ENCODE measurements at regions of chr11 and their contacts with region 1.

Region 1: GRCh38 chr11:88552377-88553062 is 215.0 kb upstream of the CTSC start:
- DNase-seq: peak; percentile 39
- H3K4me3 Mint-ChIP-seq: no peak overlapping the region
- H3K27ac Mint-ChIP-seq: no peak overlapping the region
- H3K4me1 Mint-ChIP-seq: peaks cover 3% of the 10 kb centered on the region
- H3K27me3 Mint-ChIP-seq: peaks cover 18% of the 10 kb centered on the region

Region 2: GRCh38 chr11:87722756-87723565 is 829.6 kb before region 1 on chr11:
- intact Hi-C with region 1: loop called (anchors 10 kb)
- DNase-seq: no peak
- H3K4me3 Mint-ChIP-seq: no peak overlapping the region
- H3K27ac Mint-ChIP-seq: no peak overlapping the region
- H3K4me1 Mint-ChIP-seq: no peaks in the 10 kb centered on the region
- H3K27me3 Mint-ChIP-seq: no peaks in the 10 kb centered on the region

Region 3: DNA sequence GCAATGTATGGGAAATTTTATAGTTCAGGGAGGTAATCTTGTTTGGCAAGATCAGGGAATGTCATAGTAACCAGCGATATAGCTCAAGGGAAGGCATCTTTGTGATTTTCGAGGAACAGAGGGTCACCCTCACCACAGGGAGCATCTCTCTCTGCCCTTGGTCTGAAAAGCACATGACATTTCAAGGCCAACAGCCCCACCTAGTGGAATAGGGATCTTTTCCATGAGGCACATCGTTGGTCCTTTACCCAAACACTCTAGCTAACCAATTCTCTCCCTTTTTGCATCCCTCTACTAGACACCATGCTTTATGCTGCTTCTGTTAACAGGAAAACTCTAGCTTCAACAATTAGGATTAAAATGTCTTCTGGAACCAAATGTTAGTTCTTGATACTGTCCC is 334.3 kb after region 1 on chr11:
- intact Hi-C with region 1: loop called (anchors 10 kb)
- DNase-seq: peak; percentile 10
- H3K4me3 Mint-ChIP-seq: no peak overlapping the region
- H3K27ac Mint-ChIP-seq: no peak overlapping the region
- H3K4me1 Mint-ChIP-seq: no peaks in the 10 kb centered on the region
- H3K27me3 Mint-ChIP-seq: no peaks in the 10 kb centered on the region